ENCODE measurements at regions of chr2 and their contacts with region 1.

Region 1: GRCh38 chr2:197599285-197599965 is 76.0 kb downstream of the RFTN2 start:
- DNase-seq: peak; percentile 54
- H3K4me3 ChIP-seq: peak overlapping the region in 1 of 3 experiments; percentile 24
- H3K27ac ChIP-seq: no peak overlapping the region
- H3K4me1 ChIP-seq: peaks cover 6% of the 10 kb centered on the region
- H3K27me3 ChIP-seq: peaks cover 1% of the 10 kb centered on the region
- CTCF ChIP-seq: peak; percentile 44 to 66

Region 2: GRCh38 chr2:197661626-197662025 is 62.2 kb after region 1 on chr2:
- CTCF ChIA-PET with region 1: no interaction called
- dilution Hi-C with region 1: loop called (anchors 5 kb)
- in situ Hi-C with region 1: no loop called
- intact Hi-C with region 1: no loop called
- DNase-seq: no peak
- H3K4me3 ChIP-seq: no peak overlapping the region
- H3K27ac ChIP-seq: no peak overlapping the region
- H3K4me1 ChIP-seq: no peaks in the 10 kb centered on the region
- H3K27me3 ChIP-seq: no peaks in the 10 kb centered on the region
- CTCF ChIP-seq: no peak